ENCODE measurements at regions of chr20 and their contacts with region 1.

Region 1: DNA sequence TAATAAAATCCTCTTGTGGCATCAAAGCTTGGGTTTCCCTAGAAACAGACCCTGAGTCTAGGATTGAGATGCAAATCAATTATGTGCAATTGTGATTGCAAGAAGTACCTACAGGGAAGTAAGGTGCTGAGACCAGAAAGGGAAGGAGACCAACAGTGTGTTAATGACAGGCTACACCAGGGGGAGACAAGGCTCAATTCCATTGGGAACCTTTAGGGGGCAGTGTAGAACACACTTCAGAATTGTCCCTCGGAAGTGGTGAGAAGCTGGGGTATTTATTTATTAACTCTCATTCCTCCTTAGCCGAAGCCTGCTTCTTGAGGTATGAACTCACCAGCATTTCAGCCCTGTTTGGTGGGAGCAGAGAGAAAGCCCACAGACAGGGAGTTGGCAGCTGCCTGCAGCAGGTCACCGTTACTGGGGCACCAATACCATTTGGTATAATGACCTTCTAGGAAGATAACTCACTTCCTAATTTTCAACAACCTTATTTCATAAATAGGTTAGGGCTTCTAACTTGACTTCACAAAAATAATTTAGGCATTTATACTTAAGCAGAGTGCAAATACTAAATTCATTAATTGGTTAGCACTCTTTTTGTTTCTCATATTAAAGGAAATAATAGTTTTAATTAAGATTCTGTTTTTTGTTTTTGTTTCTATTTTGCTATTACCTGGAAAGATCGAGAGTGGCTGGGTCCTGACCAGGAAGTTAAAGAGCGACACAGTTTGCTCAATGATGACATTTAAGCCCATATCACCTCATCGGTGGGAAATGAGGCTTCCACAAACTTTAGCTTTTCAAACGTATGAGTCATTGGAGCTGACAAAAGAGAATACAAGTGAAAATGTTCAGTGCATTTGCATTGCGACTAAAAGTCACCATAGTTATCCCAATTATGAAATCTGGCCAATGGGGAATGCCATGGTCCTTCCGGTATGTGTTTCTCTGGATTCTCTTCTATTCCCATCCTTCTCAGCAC is 94.8 kb downstream of the BTBD3 start:
- DNase-seq: peak; percentile 60 to 78
- H3K4me3 ChIP-seq: no peak overlapping the region
- H3K27ac ChIP-seq: no peak overlapping the region
- H3K4me1 ChIP-seq: peaks cover 0 to 3% (median 0%) of the 10 kb centered on the region in 4 experiments; a peak in 2 of 7 replicates
- H3K27me3 ChIP-seq: no peaks in the 10 kb centered on the region
- CTCF ChIP-seq: peak; percentile 70 to 100 (median 100)
- EP300 ChIP-seq: no peak
- POLR2A ChIP-seq: no peak
- RAD21 ChIP-seq: peak; percentile 76 to 84

Region 2: GRCh38 chr20:11880680-11881079 is 131.9 kb before region 1 on chr20:
- CTCF ChIA-PET with region 1: no interaction called
- POLR2A ChIA-PET with region 1: no interaction called
- DNase-seq: no peak
- H3K4me3 ChIP-seq: no peak overlapping the region
- H3K27ac ChIP-seq: no peak overlapping the region
- H3K4me1 ChIP-seq: no peaks in the 10 kb centered on the region
- H3K27me3 ChIP-seq: no peaks in the 10 kb centered on the region
- CTCF ChIP-seq: no peak
- EP300 ChIP-seq: no peak
- POLR2A ChIP-seq: no peak
- RAD21 ChIP-seq: no peak

Region 3: DNA sequence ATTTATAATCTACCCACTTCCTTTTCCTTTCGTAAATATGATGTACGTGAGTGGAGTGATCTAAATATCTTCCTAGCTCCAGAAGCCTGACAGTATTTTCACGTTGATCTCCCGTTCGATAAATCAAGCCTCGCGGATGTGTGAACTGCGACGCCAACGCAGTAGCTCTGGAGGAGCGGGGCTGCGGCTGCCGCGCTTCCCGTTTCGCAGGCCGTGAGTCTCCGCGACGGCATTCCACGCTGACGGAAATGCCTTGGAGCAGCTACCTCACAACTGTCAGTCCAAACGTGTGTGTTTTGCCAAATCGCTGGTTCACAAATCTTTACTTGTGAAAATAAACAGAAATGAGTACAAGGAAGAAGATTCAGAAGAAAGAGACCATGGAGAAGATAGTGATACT is 53.7 kb before region 1 on chr20:
- CTCF ChIA-PET with region 1: interaction called, 12 read pairs
- POLR2A ChIA-PET with region 1: no interaction called
- DNase-seq: no peak
- H3K4me3 ChIP-seq: no peak overlapping the region
- H3K27ac ChIP-seq: no peak overlapping the region
- H3K4me1 ChIP-seq: no peaks in the 10 kb centered on the region
- H3K27me3 ChIP-seq: no peaks in the 10 kb centered on the region
- CTCF ChIP-seq: no peak
- EP300 ChIP-seq: no peak
- POLR2A ChIP-seq: no peak
- RAD21 ChIP-seq: no peak

Region 4: GRCh38 chr20:11992426-11992825 is 20.1 kb before region 1 on chr20:
- CTCF ChIA-PET with region 1: interaction called, 11 read pairs
- POLR2A ChIA-PET with region 1: no interaction called
- DNase-seq: no peak
- H3K4me3 ChIP-seq: no peak overlapping the region
- H3K27ac ChIP-seq: no peak overlapping the region
- H3K4me1 ChIP-seq: no peaks in the 10 kb centered on the region
- H3K27me3 ChIP-seq: no peaks in the 10 kb centered on the region
- CTCF ChIP-seq: no peak
- EP300 ChIP-seq: no peak
- POLR2A ChIP-seq: no peak
- RAD21 ChIP-seq: no peak

Region 5: GRCh38 chr20:12023194-12023795 is 10.8 kb after region 1 on chr20:
- CTCF ChIA-PET with region 1: interaction called, 23 read pairs
- POLR2A ChIA-PET with region 1: no interaction called
- DNase-seq: no peak
- H3K4me3 ChIP-seq: no peak overlapping the region
- H3K27ac ChIP-seq: no peak overlapping the region
- H3K4me1 ChIP-seq: no peaks in the 10 kb centered on the region
- H3K27me3 ChIP-seq: no peaks in the 10 kb centered on the region
- CTCF ChIP-seq: no peak
- EP300 ChIP-seq: no peak
- POLR2A ChIP-seq: no peak
- RAD21 ChIP-seq: no peak

Region 6: DNA sequence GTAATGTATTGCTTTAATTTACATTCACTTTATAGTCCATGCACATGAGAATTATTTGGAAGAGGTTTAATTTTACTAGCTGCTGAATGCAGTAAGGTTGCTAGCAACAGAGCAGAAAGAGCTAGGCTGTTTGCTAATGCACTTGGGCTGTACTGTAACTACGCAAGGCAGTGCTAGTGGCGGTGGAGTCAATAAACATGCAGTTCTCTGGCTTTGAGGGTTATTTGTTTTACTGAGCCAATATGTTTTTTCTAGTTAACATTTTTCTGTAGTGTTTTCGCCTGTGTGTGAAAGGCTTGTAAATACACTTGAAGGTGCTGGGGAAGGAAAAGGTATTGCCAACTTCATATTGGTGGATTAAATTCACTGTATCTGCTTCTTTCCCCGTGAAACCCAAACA is 17.9 kb after region 1 on chr20:
- CTCF ChIA-PET with region 1: interaction called, 18 read pairs
- POLR2A ChIA-PET with region 1: no interaction called
- DNase-seq: no peak
- H3K4me3 ChIP-seq: no peak overlapping the region
- H3K27ac ChIP-seq: no peak overlapping the region
- H3K4me1 ChIP-seq: no peaks in the 10 kb centered on the region
- H3K27me3 ChIP-seq: no peaks in the 10 kb centered on the region
- CTCF ChIP-seq: no peak
- EP300 ChIP-seq: no peak
- POLR2A ChIP-seq: no peak
- RAD21 ChIP-seq: no peak

Region 7: GRCh38 chr20:12037521-12037920 is 25.0 kb after region 1 on chr20:
- CTCF ChIA-PET with region 1: interaction called, 18 read pairs
- POLR2A ChIA-PET with region 1: no interaction called
- DNase-seq: no peak
- H3K4me3 ChIP-seq: no peak overlapping the region
- H3K27ac ChIP-seq: no peak overlapping the region
- H3K4me1 ChIP-seq: no peaks in the 10 kb centered on the region
- H3K27me3 ChIP-seq: no peaks in the 10 kb centered on the region
- CTCF ChIP-seq: no peak
- EP300 ChIP-seq: no peak
- POLR2A ChIP-seq: no peak
- RAD21 ChIP-seq: no peak

Region 8: DNA sequence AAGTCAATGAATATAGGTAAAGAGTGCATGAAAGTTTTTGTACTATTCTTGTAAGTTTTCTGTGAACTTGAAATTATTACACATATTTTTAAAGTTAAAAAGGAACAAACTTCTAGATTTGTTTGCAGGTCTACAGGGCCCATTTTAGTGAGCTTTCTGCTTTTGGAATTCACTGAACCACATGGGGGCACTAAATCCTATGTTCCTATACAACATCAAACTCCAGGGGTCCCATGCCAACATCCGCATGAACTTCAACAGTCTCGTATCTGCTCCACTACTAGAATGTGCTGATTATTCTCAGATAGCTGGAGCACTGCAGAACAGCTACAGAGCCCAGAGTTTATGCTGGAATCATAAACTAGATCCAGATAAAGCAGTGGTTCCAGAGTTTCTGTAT is 648.4 kb after region 1 on chr20:
- CTCF ChIA-PET with region 1: no interaction called
- POLR2A ChIA-PET with region 1: no interaction called
- DNase-seq: peak; percentile 33 to 49
- H3K4me3 ChIP-seq: no peak overlapping the region
- H3K27ac ChIP-seq: no peak overlapping the region
- H3K4me1 ChIP-seq: peaks cover 0 to 4% (median 2%) of the 10 kb centered on the region in 4 experiments; a peak in 3 of 7 replicates
- H3K27me3 ChIP-seq: no peaks in the 10 kb centered on the region
- CTCF ChIP-seq: peak in 2 of 3 experiments; percentile 44 to 46; a peak in 3 of 4 replicates
- EP300 ChIP-seq: no peak
- POLR2A ChIP-seq: no peak
- RAD21 ChIP-seq: peak; percentile 60 to 77

Measured in H1 (cell line).